ENCODE measurements at regions of chr7 and their contacts with region 1.

Region 1: DNA sequence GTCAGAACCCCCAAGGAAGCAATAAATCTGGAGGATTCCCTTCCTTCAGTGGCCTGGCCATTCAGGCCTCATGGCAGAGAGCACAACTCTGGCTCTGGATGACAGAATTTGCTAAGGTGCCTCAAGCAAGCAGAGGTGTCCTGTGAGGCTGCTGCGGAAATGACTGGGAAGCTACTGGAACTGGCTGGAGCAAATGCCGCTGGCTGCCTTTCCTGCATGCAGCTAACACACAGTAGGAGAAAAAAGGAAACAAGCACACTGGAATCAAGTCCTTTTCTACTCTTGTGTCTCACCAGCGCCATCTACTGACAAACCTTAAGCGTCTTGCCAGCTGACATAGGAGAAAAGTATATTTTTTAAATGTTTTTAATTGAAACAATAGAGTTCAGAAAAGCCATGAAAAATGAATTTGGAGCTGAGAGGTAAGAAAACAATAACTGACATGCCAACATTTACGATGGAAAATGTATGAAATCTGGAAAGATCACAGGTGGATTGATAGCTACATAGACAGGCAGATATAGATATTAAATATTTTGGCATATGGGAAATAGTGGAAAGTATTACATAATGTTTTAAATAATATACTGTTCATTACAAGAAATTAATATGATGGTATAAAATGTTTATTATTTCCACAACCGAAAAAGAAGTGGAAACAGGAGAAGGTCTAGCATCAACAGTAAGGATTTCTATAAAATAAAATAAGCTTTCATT is 951.6 kb downstream of the ANKRD7 start:
- DNase-seq: peak in 2 of 9 experiments; percentile 11 to 17
- ATAC-seq: no peak
- H3K4me3 ChIP-seq: no peak overlapping the region
- H3K4me3 Mint-ChIP-seq: no peak overlapping the region
- H3K27ac ChIP-seq: no peak overlapping the region
- H3K27ac Mint-ChIP-seq: no peak overlapping the region
- H3K4me1 ChIP-seq: no peaks in the 10 kb centered on the region
- H3K4me1 Mint-ChIP-seq: no peaks in the 10 kb centered on the region
- H3K27me3 ChIP-seq: no peaks in the 10 kb centered on the region
- H3K27me3 Mint-ChIP-seq: no peaks in the 10 kb centered on the region
- CTCF ChIP-seq: no peak

Region 2: GRCh38 chr7:118259115-118259514 is 917.0 kb before region 1 on chr7:
- CTCF ChIA-PET with region 1: no interaction called
- POLR2A ChIA-PET with region 1: no interaction called
- intact Hi-C with region 1: loop called in 1 of 2 experiments (anchors 5 kb)
- DNase-seq: peak in 1 of 9 experiments; percentile 7
- ATAC-seq: no peak
- H3K4me3 ChIP-seq: no peak overlapping the region
- H3K4me3 Mint-ChIP-seq: no peak overlapping the region
- H3K27ac ChIP-seq: no peak overlapping the region
- H3K27ac Mint-ChIP-seq: no peak overlapping the region
- H3K4me1 ChIP-seq: no peaks in the 10 kb centered on the region
- H3K4me1 Mint-ChIP-seq: no peaks in the 10 kb centered on the region
- H3K27me3 ChIP-seq: no peaks in the 10 kb centered on the region
- H3K27me3 Mint-ChIP-seq: peaks cover 7% of the 10 kb centered on the region
- CTCF ChIP-seq: peak; percentile 15

Region 3: DNA sequence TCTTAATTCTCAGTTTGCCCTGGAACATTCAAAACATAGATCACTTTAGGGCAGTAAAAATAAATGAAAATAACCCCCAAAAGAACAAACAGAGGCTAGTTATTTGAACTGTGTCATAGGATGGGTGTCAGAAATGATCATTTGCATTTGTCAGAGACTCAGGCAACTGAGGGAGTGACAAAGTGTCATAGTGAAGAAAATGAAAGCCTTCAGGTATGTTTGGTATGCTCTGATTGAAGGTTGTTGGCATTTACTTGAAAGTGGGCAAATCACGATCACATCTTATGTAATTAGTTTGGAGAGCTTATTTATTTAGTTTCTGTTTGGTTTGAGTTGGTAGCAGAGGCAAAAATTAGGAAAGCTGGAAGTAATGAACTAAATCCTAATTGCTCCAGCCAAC is 70.7 kb before region 1 on chr7:
- CTCF ChIA-PET with region 1: no interaction called
- POLR2A ChIA-PET with region 1: no interaction called
- intact Hi-C with region 1: loop called in 1 of 2 experiments (anchors 10 kb)
- DNase-seq: no peak
- ATAC-seq: no peak
- H3K4me3 ChIP-seq: no peak overlapping the region
- H3K4me3 Mint-ChIP-seq: no peak overlapping the region
- H3K27ac ChIP-seq: no peak overlapping the region
- H3K27ac Mint-ChIP-seq: no peak overlapping the region
- H3K4me1 ChIP-seq: no peaks in the 10 kb centered on the region
- H3K4me1 Mint-ChIP-seq: no peaks in the 10 kb centered on the region
- H3K27me3 ChIP-seq: no peaks in the 10 kb centered on the region
- H3K27me3 Mint-ChIP-seq: no peaks in the 10 kb centered on the region
- CTCF ChIP-seq: no peak

Region 4: GRCh38 chr7:119254742-119255141 is 78.7 kb after region 1 on chr7:
- CTCF ChIA-PET with region 1: no interaction called
- POLR2A ChIA-PET with region 1: no interaction called
- intact Hi-C with region 1: no loop called
- DNase-seq: no peak
- ATAC-seq: no peak
- H3K4me3 ChIP-seq: no peak overlapping the region
- H3K4me3 Mint-ChIP-seq: no peak overlapping the region
- H3K27ac ChIP-seq: no peak overlapping the region
- H3K27ac Mint-ChIP-seq: no peak overlapping the region
- H3K4me1 ChIP-seq: no peaks in the 10 kb centered on the region
- H3K4me1 Mint-ChIP-seq: no peaks in the 10 kb centered on the region
- H3K27me3 ChIP-seq: no peaks in the 10 kb centered on the region
- H3K27me3 Mint-ChIP-seq: no peaks in the 10 kb centered on the region
- CTCF ChIP-seq: no peak